WTC11 (cell line): ENCODE measurements at regions of chr19 and their contacts with region 1.

Region 1: GRCh38 chr19:3440082-3440481 is 40.2 kb downstream of the SMIM24 start:
- DNase-seq: peak; percentile 87
- ATAC-seq: peak; percentile 71
- H3K4me3 Mint-ChIP-seq: no peak overlapping the region
- H3K27ac Mint-ChIP-seq: no peak overlapping the region
- H3K4me1 Mint-ChIP-seq: peaks cover 17% of the 10 kb centered on the region
- H3K27me3 Mint-ChIP-seq: no peaks in the 10 kb centered on the region
- CTCF ChIP-seq: peak; percentile 62

Region 2: GRCh38 chr19:3336680-3337523 is 103.2 kb before region 1 on chr19:
- CTCF ChIA-PET with region 1: interaction called, 11 read pairs
- POLR2A ChIA-PET with region 1: no interaction called
- DNase-seq: no peak
- ATAC-seq: no peak
- H3K4me3 Mint-ChIP-seq: no peak overlapping the region
- H3K27ac Mint-ChIP-seq: no peak overlapping the region
- H3K4me1 Mint-ChIP-seq: no peaks in the 10 kb centered on the region
- H3K27me3 Mint-ChIP-seq: peaks cover 29% of the 10 kb centered on the region
- CTCF ChIP-seq: no peak

Region 3: GRCh38 chr19:3450796-3451411 is 10.8 kb after region 1 on chr19:
- CTCF ChIA-PET with region 1: no interaction called
- POLR2A ChIA-PET with region 1: no interaction called
- DNase-seq: no peak
- ATAC-seq: no peak
- H3K4me3 Mint-ChIP-seq: no peak overlapping the region
- H3K27ac Mint-ChIP-seq: no peak overlapping the region
- H3K4me1 Mint-ChIP-seq: no peaks in the 10 kb centered on the region
- H3K27me3 Mint-ChIP-seq: no peaks in the 10 kb centered on the region
- CTCF ChIP-seq: no peak